ENCODE measurements at regions of chr15 and their contacts with region 1.

Region 1: DNA sequence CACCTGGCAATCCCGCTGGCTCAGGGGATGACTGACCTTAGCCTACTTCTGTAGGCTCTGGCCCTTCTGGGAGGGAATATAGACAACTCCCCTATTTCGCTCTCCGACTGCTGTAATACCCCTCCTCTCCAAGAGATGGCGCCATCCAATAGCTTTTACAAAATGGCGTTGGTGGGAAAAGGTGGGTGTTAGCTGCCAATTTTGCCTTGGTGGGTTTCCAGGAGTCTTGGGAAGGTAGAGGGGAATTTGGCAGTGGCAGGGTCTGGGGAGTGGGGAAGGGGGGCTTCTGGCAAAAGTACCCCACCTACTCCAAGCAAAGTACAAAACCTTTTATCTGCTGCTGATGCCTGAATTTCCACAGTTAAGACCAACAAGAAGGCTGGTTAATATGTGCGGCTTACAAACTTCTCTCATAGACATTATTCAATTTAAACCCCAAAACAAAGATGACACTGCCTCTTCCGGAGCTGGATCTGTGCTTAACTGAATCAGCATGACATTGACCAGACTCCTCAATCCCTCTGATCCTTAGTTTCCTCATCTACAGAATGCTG is 62.1 kb downstream of the RASGRF1 start:
- DNase-seq: peak; percentile 23 to 90
- H3K4me3 ChIP-seq: no peak overlapping the region
- H3K27ac ChIP-seq: no peak overlapping the region
- H3K4me1 ChIP-seq: no peaks in the 10 kb centered on the region; a peak in 1 of 7 replicates
- H3K27me3 ChIP-seq: no peaks in the 10 kb centered on the region
- CTCF ChIP-seq: peak; percentile 63 to 95 (median 95)
- EP300 ChIP-seq: no peak
- POLR2A ChIP-seq: no peak
- RAD21 ChIP-seq: peak; percentile 97 to 99

Region 2: DNA sequence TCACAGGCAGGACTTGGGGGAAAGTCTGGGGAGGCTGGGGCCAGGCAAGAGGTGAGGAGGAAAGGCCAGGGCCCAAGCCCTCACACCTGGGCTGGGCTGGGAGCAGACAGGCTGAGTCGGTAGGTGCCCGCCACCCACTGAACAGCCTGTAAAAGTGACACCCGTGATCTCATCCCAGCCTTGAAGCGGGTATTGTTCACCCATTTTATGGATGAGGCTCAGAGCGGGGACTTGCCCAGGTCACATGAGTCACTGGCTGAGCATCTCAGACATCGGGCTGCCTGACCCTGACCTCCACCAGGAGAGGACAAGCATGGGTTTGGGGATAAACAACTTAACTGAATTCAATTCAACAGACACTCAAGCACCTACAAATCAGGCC is 31.6 kb before region 1 on chr15:
- CTCF ChIA-PET with region 1: interaction called, 40 read pairs
- POLR2A ChIA-PET with region 1: no interaction called
- DNase-seq: no peak
- H3K4me3 ChIP-seq: no peak overlapping the region
- H3K27ac ChIP-seq: no peak overlapping the region
- H3K4me1 ChIP-seq: peaks cover 0 to 25% (median 14%) of the 10 kb centered on the region in 4 experiments; a peak in 5 of 7 replicates
- H3K27me3 ChIP-seq: no peaks in the 10 kb centered on the region; a peak in 1 of 7 replicates
- CTCF ChIP-seq: no peak
- EP300 ChIP-seq: no peak
- POLR2A ChIP-seq: no peak
- RAD21 ChIP-seq: no peak

Region 3: GRCh38 chr15:79051029-79051428 is 22.5 kb after region 1 on chr15:
- CTCF ChIA-PET with region 1: interaction called, 236 read pairs
- POLR2A ChIA-PET with region 1: no interaction called
- DNase-seq: no peak
- H3K4me3 ChIP-seq: no peak overlapping the region
- H3K27ac ChIP-seq: no peak overlapping the region
- H3K4me1 ChIP-seq: no peaks in the 10 kb centered on the region; a peak in 1 of 7 replicates
- H3K27me3 ChIP-seq: peaks cover 0 to 7% (median 2%) of the 10 kb centered on the region in 4 experiments; a peak in 3 of 7 replicates
- CTCF ChIP-seq: no peak
- EP300 ChIP-seq: no peak
- POLR2A ChIP-seq: no peak
- RAD21 ChIP-seq: no peak

Region 4: GRCh38 chr15:79084308-79084968 is 56.0 kb after region 1 on chr15:
- CTCF ChIA-PET with region 1: interaction called, 46 read pairs
- POLR2A ChIA-PET with region 1: no interaction called
- DNase-seq: no peak
- H3K4me3 ChIP-seq: no peak overlapping the region
- H3K27ac ChIP-seq: no peak overlapping the region
- H3K4me1 ChIP-seq: peaks cover 0 to 4% (median 3%) of the 10 kb centered on the region in 4 experiments; a peak in 3 of 7 replicates
- H3K27me3 ChIP-seq: peaks cover 22 to 53% (median 41%) of the 10 kb centered on the region in 4 experiments
- CTCF ChIP-seq: no peak
- EP300 ChIP-seq: no peak
- POLR2A ChIP-seq: no peak
- RAD21 ChIP-seq: no peak

Region 5: GRCh38 chr15:79154483-79155135 is 126.1 kb after region 1 on chr15:
- CTCF ChIA-PET with region 1: interaction called, 18 read pairs
- POLR2A ChIA-PET with region 1: no interaction called
- DNase-seq: no peak
- H3K4me3 ChIP-seq: no peak overlapping the region
- H3K27ac ChIP-seq: no peak overlapping the region
- H3K4me1 ChIP-seq: peaks cover 0 to 8% (median 2%) of the 10 kb centered on the region in 4 experiments; a peak in 1 of 7 replicates
- H3K27me3 ChIP-seq: peaks cover 0 to 3% (median 1%) of the 10 kb centered on the region in 4 experiments; a peak in 2 of 7 replicates
- CTCF ChIP-seq: no peak
- EP300 ChIP-seq: no peak
- POLR2A ChIP-seq: no peak
- RAD21 ChIP-seq: no peak

Region 6: GRCh38 chr15:79329171-79329611 is 300.7 kb after region 1 on chr15:
- CTCF ChIA-PET with region 1: no interaction called
- POLR2A ChIA-PET with region 1: no interaction called
- DNase-seq: no peak
- H3K4me3 ChIP-seq: no peak overlapping the region
- H3K27ac ChIP-seq: no peak overlapping the region
- H3K4me1 ChIP-seq: peaks cover 0 to 3% (median 0%) of the 10 kb centered on the region in 4 experiments; a peak in 1 of 7 replicates
- H3K27me3 ChIP-seq: no peaks in the 10 kb centered on the region
- CTCF ChIP-seq: no peak
- EP300 ChIP-seq: no peak
- POLR2A ChIP-seq: no peak
- RAD21 ChIP-seq: no peak

Measured in H1 (cell line).